H1 (cell line): ENCODE measurements at regions of chr3 and their contacts with region 1.

Region 1: DNA sequence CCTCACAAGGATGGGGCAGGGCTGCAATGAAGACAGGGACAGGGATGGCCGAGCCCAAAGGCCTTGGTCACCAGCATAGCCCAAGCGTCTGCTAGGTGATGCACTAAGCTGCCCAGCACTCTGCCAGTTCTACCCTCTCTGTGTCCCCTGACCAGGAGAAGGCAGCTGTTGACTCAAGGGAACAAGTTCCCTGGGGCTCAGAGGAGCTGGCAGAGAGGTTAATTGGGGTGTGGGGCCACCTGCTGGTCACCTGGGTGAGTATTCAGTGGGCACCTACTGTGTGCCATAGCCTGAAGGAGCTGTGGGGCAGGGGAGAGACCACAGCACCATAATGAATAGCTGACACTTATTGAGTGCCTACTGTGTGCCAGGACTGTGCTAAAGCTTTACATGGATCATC is 22.0 kb upstream of the DOCK3 start:
- DNase-seq: peak; percentile 46 to 76
- H3K4me3 ChIP-seq: no peak overlapping the region
- H3K27ac ChIP-seq: no peak overlapping the region
- H3K4me1 ChIP-seq: peaks cover 0 to 18% (median 6%) of the 10 kb centered on the region in 4 experiments; a peak in 6 of 7 replicates
- H3K27me3 ChIP-seq: no peaks in the 10 kb centered on the region
- CTCF ChIP-seq: peak in 2 of 3 experiments; percentile 65 to 70; a peak in 3 of 4 replicates
- EP300 ChIP-seq: no peak
- POLR2A ChIP-seq: no peak
- RAD21 ChIP-seq: peak; percentile 80 to 89

Region 2: GRCh38 chr3:50617096-50617791 is 35.5 kb before region 1 on chr3 and contains the start of gene MAPKAPK3:
- CTCF ChIA-PET with region 1: interaction called, 1,262 read pairs
- POLR2A ChIA-PET with region 1: interaction called, 15 read pairs
- DNase-seq: no peak
- H3K4me3 ChIP-seq: peak within 1 kb of the TSS; percentile 59 to 74 (median 71)
- H3K27ac ChIP-seq: 0 out of 2 replicates have a peak within 1 kb of the TSS, but pooled peaks have one; percentile 29
- H3K4me1 ChIP-seq: peaks cover 0 to 15% (median 9%) of the 10 kb centered on the region in 4 experiments; a peak in 6 of 7 replicates
- H3K27me3 ChIP-seq: peaks cover 3 to 21% (median 16%) of the 10 kb centered on the region in 4 experiments; a peak in 6 of 7 replicates
- CTCF ChIP-seq: no peak
- EP300 ChIP-seq: peak in 1 of 2 experiments; percentile 2; a peak in 1 of 3 replicates
- POLR2A ChIP-seq: no peak; a peak in 1 of 3 replicates
- RAD21 ChIP-seq: no peak
- total RNA-seq, gene MAPKAPK3: 52.7 and 65.4 TPM in 2 replicates

Region 3: DNA sequence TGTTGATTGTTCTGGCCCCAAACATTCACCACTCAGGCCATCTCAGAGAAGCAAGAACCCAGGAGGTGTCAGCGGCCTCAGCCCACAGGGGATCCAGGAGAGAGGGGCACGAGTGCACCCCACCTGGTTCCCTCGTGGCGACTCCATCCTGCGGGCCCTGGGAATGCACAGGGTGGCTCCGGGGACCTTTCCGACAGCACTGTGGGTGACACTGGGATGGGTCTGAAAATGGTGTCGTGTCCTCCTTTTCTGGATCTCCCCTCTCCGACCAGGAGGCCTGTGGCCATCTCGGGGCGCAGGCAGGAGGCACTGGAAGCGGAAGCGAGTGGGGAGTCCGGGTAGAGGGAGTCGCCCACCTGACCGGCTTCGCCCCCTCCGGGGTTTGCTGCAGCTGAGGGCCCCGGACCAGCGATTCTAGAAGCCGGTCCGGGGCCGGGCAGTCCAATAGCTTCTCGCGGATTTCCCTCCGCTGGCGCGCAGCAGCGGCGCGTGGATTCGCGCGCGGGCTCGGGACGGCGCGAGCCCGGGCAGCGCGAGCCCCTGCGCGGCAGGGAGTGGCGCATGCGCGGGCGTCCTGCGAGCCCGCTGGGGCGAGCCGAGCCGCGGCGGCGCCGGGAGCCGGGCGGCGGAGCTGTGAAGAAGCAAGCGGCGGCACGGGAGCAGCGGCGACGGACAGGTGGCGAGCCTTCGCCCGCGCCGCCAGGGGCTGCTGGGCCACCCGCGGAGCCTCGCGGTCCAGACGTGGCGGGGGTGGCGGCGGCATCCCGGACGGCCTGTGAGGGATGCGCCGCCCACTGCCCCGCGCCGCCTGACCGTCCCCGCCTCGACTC is 21.9 kb after region 1 on chr3 and contains the start of gene DOCK3:
- CTCF ChIA-PET with region 1: interaction called, 66 read pairs
- POLR2A ChIA-PET with region 1: interaction called, 4 read pairs
- DNase-seq: peak in 1 of 2 experiments; percentile 72
- H3K4me3 ChIP-seq: peak within 1 kb of the TSS; percentile 51 to 81 (median 62)
- H3K27ac ChIP-seq: peak within 1 kb of the TSS; percentile 34; the same call in 1 of the 2 replicates
- H3K4me1 ChIP-seq: peaks cover 4 to 10% (median 6%) of the 10 kb centered on the region in 4 experiments
- H3K27me3 ChIP-seq: peaks cover 0 to 16% (median 14%) of the 10 kb centered on the region in 4 experiments; a peak in 6 of 7 replicates
- CTCF ChIP-seq: no peak
- EP300 ChIP-seq: no peak
- POLR2A ChIP-seq: 0 out of 3 replicates have a peak, but pooled peaks of 1 of the 2 experiments have one; percentile 16
- RAD21 ChIP-seq: no peak
- total RNA-seq, gene DOCK3: 4.6 and 5.0 TPM in 2 replicates